Adrenal gland (tissue), 19 donors: ENCODE measurements at regions of chr1 and their contacts with region 1.

Region 1: GRCh38 chr1:86833461-86834215 is 80.3 kb downstream of the SELENOF start:
- DNase-seq: peak; percentile 78 to 91 (median 86)
- H3K4me3 ChIP-seq: no peak overlapping the region
- H3K27ac ChIP-seq: no peak overlapping the region
- H3K4me1 ChIP-seq: peaks cover 0 to 4% of the 10 kb centered on the region in 2 donors
- H3K27me3 ChIP-seq: no peaks in the 10 kb centered on the region
- CTCF ChIP-seq: peak; percentile 34 to 79 (median 74)
- POLR2A ChIP-seq: no peak

Region 2: DNA sequence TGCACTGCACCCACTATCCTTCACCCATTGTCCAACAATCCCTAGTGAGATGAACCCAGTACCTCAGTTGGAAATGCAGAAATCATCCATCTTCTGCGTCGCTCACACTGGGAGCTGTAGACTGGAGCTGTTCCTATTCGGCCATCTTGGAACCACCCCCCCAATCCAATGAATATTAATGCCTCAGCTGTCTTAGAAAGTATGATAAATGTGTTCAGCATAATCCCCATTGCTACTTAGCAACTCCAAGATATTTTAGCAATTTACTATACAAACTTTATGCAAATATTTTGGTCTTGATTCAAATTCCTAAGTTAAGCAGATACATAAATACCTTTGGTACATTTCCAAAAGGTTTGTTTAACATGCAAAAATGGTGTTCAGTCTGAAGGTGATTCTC is 199.7 kb before region 1 on chr1:
- intact Hi-C with region 1: no loop called
- DNase-seq: no peak
- H3K4me3 ChIP-seq: no peak overlapping the region
- H3K27ac ChIP-seq: no peak overlapping the region
- H3K4me1 ChIP-seq: no peaks in the 10 kb centered on the region
- H3K27me3 ChIP-seq: no peaks in the 10 kb centered on the region
- CTCF ChIP-seq: no peak
- POLR2A ChIP-seq: no peak

Region 3: DNA sequence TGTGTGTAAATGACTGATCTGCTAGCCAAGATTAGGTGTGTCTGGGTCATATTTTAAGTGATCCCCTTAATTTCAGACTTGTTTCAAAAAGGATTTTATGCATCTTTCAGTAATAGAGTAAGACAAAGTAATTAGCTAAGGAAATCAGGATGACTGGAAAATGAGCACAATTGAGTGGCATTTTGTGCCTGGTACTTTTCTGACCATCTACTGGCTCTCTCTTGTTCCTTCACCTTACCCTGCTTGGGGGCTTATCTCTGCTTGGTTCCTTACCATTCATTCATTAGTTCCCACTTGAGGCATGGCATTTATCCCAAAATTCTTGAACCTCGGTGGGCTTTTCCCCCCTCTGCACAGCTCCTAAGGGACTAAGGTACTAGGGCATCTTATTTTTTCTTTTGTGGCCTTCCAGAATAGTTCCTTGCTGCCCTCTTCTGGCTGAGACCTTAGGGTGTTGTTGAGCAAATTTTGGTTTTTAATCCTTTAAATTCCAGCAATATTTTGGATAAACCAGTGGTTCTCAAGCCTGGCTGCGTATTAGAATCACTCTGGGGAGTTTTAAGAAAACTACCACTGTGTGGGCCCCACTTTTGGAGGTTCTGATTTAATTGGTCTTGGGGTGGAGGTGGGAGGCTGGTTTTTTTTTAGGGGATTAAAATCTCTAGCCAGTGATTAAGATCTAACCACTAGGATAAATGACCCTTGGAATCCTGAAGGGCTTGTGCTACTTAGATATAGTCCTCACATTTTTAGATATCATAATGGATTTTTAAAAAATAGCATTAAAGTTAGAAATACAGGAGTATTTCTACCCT is 131.6 kb after region 1 on chr1:
- intact Hi-C with region 1: loop called (anchors 10 kb)
- DNase-seq: peak in 4 of 7 donors; percentile 31 to 60 (median 46)
- H3K4me3 ChIP-seq: no peak overlapping the region
- H3K27ac ChIP-seq: no peak overlapping the region
- H3K4me1 ChIP-seq: no peaks in the 10 kb centered on the region
- H3K27me3 ChIP-seq: no peaks in the 10 kb centered on the region
- CTCF ChIP-seq: peak; percentile 49 to 71 (median 66)
- POLR2A ChIP-seq: no peak

Region 4: DNA sequence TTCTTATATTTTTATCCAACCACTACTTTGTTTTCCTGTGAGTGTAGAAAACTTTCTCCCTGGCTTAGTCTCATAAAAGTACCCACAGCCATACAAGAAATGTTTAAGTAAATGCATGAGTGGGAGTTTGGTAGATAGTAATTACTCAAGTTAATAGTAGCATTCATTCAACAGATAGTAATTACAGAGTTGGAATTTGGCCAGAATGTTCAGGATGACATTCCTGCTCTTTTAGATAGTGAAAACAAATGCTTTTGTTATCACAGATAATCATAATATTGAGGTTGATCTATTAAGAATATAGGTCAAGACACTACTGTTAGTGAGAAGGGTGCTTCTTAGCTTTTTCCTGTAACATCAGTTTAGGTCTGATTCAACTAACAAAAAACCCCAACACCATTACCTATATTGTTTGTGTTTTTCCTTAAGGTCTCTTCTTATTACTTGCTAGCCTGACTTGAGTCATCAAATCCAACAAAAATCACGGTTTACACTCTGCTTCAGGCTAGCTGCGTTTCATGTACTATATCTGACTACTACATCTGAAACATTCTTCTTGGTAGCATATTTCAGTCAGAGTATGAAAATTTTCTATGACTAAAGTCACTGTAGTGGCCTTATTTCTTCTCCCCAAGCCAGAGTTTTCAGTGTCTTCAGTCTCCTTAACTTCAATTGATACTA is 244.5 kb after region 1 on chr1:
- intact Hi-C with region 1: loop called in 1 of 2 experiments (anchors 10 kb)
- DNase-seq: no peak
- H3K4me3 ChIP-seq: no peak overlapping the region
- H3K27ac ChIP-seq: peak overlapping the region in 1 of 5 donors; percentile 21
- H3K4me1 ChIP-seq: peaks cover 12 to 15% of the 10 kb centered on the region in 2 donors
- H3K27me3 ChIP-seq: no peaks in the 10 kb centered on the region
- CTCF ChIP-seq: no peak
- POLR2A ChIP-seq: no peak

Region 5: GRCh38 chr1:87089070-87089736 is 255.6 kb after region 1 on chr1:
- intact Hi-C with region 1: loop called in 1 of 2 experiments (anchors 5 kb)
- DNase-seq: no peak
- H3K4me3 ChIP-seq: no peak overlapping the region
- H3K27ac ChIP-seq: no peak overlapping the region
- H3K4me1 ChIP-seq: peaks cover 0 to under 1% of the 10 kb centered on the region in 2 donors
- H3K27me3 ChIP-seq: no peaks in the 10 kb centered on the region
- CTCF ChIP-seq: no peak
- POLR2A ChIP-seq: no peak